GM18951 (cell line): ENCODE measurements at regions of chr2 and their contacts with region 1.

Region 1: GRCh38 chr2:218418717-218419458 is at the start of gene VIL1:
- POLR2A ChIP-seq: no peak

Region 2: GRCh38 chr2:218648088-218648786 is 229.3 kb after region 1 on chr2:
- in situ Hi-C with region 1: loop called (anchors 5 kb)
- POLR2A ChIP-seq: no peak

Region 3: DNA sequence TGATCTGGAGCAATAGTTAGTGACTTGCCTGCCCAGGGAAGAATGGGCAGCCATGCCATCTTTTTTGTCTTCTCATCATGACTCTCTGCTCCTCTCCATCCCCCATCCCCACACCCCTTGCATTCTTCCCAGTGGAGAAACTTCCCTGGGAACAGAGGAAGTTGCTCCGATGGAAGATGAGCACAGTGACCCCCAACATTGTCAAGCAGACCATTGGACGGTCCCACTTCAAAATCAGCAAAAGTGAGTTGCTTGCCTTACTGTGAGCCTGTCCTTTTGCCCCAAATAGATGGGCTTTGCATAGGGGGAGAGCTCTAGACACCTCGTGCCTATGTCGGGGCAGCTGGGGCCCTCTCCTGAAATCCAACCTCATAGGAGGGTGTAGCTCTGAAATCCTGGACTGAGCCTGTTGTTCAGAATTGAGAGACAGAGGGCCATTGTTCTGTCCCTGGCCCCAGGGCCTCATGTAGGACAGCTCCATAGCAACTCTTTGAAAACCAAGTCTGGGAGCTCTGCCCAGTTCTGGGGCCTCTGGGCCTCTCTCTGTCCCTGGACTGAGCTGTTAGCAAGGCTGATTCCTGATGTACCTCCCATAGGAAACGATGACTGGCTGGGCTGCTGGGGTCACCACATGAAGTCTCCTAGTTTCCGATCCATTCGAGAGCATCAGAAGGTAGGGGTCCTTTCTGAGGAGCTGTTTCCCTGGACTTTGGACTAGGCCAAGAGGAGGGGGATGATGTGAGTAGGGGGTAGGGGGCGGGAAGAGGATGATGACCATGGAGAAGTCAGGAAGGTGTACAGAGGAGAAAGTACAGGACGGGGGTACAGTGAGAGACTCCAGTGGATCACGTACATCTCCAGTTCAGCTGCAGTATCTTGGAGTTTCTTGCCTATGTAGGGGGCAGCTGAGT is 326.9 kb after region 1 on chr2:
- in situ Hi-C with region 1: no loop called
- POLR2A ChIP-seq: no peak